ENCODE measurements at regions of chr1 and their contacts with region 1.

Region 1: GRCh38 chr1:229258031-229258756 is 12.7 kb upstream of the RAB4A start:
- DNase-seq: peak; percentile 83
- H3K4me3 Mint-ChIP-seq: no peak overlapping the region
- H3K27ac Mint-ChIP-seq: no peak overlapping the region
- H3K4me1 Mint-ChIP-seq: peaks cover 26% of the 10 kb centered on the region
- H3K27me3 Mint-ChIP-seq: no peaks in the 10 kb centered on the region
- CTCF ChIP-seq: peak; percentile 85

Region 2: GRCh38 chr1:228664399-228664914 is 593.7 kb before region 1 on chr1:
- CTCF ChIA-PET with region 1: interaction called, 8 read pairs
- intact Hi-C with region 1: loop called (anchors 1 kb)
- DNase-seq: peak; percentile 88
- H3K4me3 Mint-ChIP-seq: peak overlapping the region; percentile 23
- H3K27ac Mint-ChIP-seq: no peak overlapping the region
- H3K4me1 Mint-ChIP-seq: peaks cover 40% of the 10 kb centered on the region
- H3K27me3 Mint-ChIP-seq: no peaks in the 10 kb centered on the region
- CTCF ChIP-seq: peak; percentile 79

Region 3: GRCh38 chr1:228734881-228735801 is 523.1 kb before region 1 on chr1 and contains the start of gene RHOU:
- CTCF ChIA-PET with region 1: no interaction called
- intact Hi-C with region 1: loop called (anchors 2 kb)
- DNase-seq: peak; percentile 90
- H3K4me3 Mint-ChIP-seq: peak within 1 kb of the TSS; percentile 75
- H3K27ac Mint-ChIP-seq: peak within 1 kb of the TSS; percentile 51
- H3K4me1 Mint-ChIP-seq: peaks cover 8% of the 10 kb centered on the region
- H3K27me3 Mint-ChIP-seq: no peaks in the 10 kb centered on the region
- CTCF ChIP-seq: peak; percentile 92
- total RNA-seq, gene RHOU: 6.5 and 8.2 TPM in 2 replicates

Region 4: GRCh38 chr1:229280037-229280828 is 22.0 kb after region 1 on chr1:
- CTCF ChIA-PET with region 1: no interaction called
- intact Hi-C with region 1: no loop called
- DNase-seq: no peak
- H3K4me3 Mint-ChIP-seq: no peak overlapping the region
- H3K27ac Mint-ChIP-seq: no peak overlapping the region
- H3K4me1 Mint-ChIP-seq: peaks cover 5% of the 10 kb centered on the region
- H3K27me3 Mint-ChIP-seq: no peaks in the 10 kb centered on the region
- CTCF ChIP-seq: no peak

Region 5: GRCh38 chr1:229378586-229379367 is 120.6 kb after region 1 on chr1:
- CTCF ChIA-PET with region 1: no interaction called
- intact Hi-C with region 1: no loop called
- DNase-seq: no peak
- H3K4me3 Mint-ChIP-seq: no peak overlapping the region
- H3K27ac Mint-ChIP-seq: no peak overlapping the region
- H3K4me1 Mint-ChIP-seq: no peaks in the 10 kb centered on the region
- H3K27me3 Mint-ChIP-seq: peaks cover 26% of the 10 kb centered on the region
- CTCF ChIP-seq: no peak

Region 6: DNA sequence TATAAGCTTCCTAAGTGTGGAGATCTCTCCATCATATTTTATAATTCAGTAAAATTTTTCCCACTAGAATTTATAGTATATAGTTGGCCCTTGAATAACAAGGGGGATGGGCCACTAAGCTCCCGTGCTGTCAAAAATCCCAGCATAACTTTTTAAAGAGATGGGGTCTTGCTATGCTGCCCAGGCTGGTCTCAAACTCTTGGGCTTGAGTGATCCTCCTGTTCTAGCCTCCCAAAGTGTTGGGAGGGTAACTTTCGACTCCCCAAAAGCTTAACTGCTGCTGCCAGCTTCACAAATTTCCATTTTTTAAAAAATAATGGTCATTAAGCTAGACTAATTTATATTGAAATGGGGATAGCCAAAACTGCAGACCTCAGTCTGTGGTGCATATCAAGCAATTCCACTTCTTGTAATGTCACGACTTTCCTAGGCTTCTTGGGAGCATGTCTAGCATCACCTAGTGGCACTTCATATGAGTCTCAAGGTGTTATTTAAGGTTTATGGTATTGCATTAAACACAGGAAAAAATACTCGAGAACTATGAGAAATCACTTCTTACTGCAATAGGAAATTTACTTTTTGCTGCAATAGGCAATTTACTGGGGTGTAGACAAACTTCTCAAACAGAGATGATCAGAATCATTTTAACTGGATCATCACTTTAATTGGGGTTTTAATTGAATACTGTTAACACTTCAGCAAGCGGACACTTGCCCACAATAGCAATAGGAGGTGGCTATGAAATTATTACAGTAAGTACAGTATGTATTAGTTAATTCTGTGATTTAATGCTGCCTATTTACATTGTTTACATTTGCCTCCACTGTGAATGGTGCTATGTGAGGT is 195.0 kb after region 1 on chr1:
- CTCF ChIA-PET with region 1: interaction called, 5 read pairs
- intact Hi-C with region 1: loop called (anchors 1 kb)
- DNase-seq: no peak
- H3K4me3 Mint-ChIP-seq: no peak overlapping the region
- H3K27ac Mint-ChIP-seq: no peak overlapping the region
- H3K4me1 Mint-ChIP-seq: no peaks in the 10 kb centered on the region
- H3K27me3 Mint-ChIP-seq: no peaks in the 10 kb centered on the region
- CTCF ChIP-seq: no peak

Region 7: DNA sequence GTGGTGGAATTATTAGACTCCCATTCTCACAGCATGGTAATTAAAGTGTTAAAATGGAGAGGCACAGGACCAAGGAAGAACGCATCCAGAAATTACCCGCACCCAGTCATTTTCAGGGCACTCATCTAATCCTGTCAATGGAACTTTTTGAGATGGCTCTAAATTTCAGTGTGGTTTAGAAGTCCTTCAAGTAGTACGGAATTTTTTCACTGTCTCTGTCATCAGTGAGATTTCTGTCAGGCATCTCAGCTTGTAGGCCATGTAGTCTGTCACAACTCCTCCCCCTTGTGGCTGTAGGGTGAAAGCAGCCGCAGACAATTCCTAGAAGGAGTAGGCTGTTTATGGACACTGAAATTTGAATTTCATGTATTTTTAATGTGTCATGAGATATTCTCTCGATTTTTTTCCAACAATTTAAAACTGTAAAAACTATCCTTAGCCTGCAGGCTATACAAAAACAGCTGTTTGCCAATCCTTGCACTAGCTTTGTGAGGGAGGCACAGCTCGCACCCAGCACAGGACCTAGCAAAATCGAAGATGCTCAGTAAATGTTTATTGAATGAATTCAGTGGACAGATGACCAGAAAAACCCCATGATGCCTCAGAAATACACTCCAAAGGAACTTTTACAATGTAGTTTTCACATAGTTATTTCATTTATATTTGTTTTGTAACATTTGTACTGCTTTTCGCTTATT is 256.5 kb after region 1 on chr1:
- CTCF ChIA-PET with region 1: interaction called, 4 read pairs
- intact Hi-C with region 1: loop called (anchors 1 kb)
- DNase-seq: peak; percentile 78
- H3K4me3 Mint-ChIP-seq: no peak overlapping the region
- H3K27ac Mint-ChIP-seq: no peak overlapping the region
- H3K4me1 Mint-ChIP-seq: peaks cover 6% of the 10 kb centered on the region
- H3K27me3 Mint-ChIP-seq: no peaks in the 10 kb centered on the region
- CTCF ChIP-seq: peak; percentile 85